Psoas muscle (tissue), 8 donors: ENCODE measurements at regions of chr4 and their contacts with region 1.

Region 1: DNA sequence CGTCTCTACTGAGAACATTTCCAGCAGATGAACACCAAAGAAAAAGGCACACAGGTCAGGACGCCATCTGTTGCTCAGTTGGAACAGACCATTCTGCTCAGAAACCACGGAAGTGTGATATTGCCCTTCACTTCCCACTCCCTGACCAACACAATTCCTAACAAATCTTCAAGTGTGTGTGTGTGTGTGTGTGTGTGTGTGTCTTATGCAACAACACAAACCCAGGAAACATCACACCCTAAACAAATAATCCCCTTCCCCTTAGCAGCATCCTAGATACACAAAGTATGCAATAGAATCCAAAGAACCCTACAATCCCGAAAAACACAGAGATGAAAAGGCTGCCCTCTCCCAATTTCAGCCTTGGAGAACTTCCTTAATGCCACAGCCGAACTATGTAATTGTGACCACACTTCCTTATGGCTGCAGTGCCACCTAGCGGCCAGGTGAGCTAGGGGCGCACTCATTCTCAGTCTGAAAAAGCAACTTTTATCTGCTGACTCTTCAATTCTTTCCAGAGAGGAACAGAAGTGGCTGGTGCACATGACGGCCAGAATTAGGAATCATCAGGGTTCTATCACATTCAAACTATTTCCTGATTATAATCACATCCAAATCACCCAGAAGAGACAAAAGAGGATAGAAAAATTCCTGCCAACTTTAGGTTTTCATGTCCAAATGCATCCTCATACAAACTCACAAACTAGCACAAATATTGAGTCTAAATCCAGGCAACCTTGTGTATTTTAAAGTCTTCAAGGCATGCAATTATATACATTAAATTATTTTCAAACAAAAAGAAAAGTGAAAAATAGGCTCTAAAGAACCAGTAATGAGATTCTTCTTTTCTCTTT is 164.9 kb downstream of the DHX15 start:
- DNase-seq: peak; percentile 75 to 87
- ATAC-seq: peak; percentile 79 to 89 (median 86)
- H3K4me3 ChIP-seq: no peak overlapping the region
- H3K27ac ChIP-seq: no peak overlapping the region
- H3K4me1 ChIP-seq: peaks cover 9% of the 10 kb centered on the region
- H3K27me3 ChIP-seq: no peaks in the 10 kb centered on the region
- CTCF ChIP-seq: peak; percentile 92

Region 2: DNA sequence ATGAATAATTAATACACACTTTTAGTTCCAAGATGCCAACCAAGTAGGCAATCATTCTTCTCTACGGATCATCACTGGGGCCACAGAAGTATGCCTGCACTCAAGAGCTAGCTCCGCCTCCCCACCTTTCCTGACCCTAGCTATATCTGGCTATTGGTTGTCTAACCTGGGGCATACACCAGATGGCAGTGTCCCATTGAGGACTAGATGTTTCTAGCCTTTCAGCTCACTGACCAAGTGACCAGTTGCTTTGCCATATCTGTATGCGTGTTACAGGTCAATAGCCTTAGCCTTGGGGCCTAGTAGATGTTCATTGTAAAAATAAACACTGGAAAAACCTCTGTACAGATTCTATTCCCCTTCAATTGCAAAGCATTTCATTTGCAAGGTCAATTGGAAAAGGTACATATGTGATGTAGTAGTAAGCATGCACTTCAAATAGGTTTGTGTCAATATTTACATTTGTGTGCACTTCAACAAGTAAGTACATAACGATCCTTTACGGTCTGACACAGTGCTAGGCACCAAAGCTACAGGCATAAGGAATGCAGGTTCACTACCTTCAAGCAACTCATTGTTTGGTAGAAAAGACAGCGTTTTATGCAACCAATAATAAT is 1051.2 kb before region 1 on chr4:
- intact Hi-C with region 1: loop called in 1 of 2 experiments (anchors 5 kb)
- DNase-seq: peak in 1 of 2 donors; percentile 25
- ATAC-seq: peak; percentile 90 to 95 (median 93)
- H3K4me3 ChIP-seq: no peak overlapping the region
- H3K27ac ChIP-seq: peak overlapping the region; percentile 75
- H3K4me1 ChIP-seq: peaks cover 26% of the 10 kb centered on the region
- H3K27me3 ChIP-seq: no peaks in the 10 kb centered on the region
- CTCF ChIP-seq: peak; percentile 66

Region 3: GRCh38 chr4:23934915-23935314 is 484.5 kb before region 1 on chr4:
- intact Hi-C with region 1: loop called (anchors 5 to 10 kb)
- DNase-seq: peak; percentile 72 to 88
- ATAC-seq: peak; percentile 80 to 84 (median 83)
- H3K4me3 ChIP-seq: no peak overlapping the region
- H3K27ac ChIP-seq: peak overlapping the region; percentile 62
- H3K4me1 ChIP-seq: peaks cover 38% of the 10 kb centered on the region
- H3K27me3 ChIP-seq: no peaks in the 10 kb centered on the region
- CTCF ChIP-seq: no peak

Region 4: GRCh38 chr4:24070117-24070516 is 349.3 kb before region 1 on chr4:
- intact Hi-C with region 1: loop called in 1 of 2 experiments (anchors 10 kb)
- DNase-seq: no peak
- ATAC-seq: no peak
- H3K4me3 ChIP-seq: no peak overlapping the region
- H3K27ac ChIP-seq: no peak overlapping the region
- H3K4me1 ChIP-seq: peaks cover 14% of the 10 kb centered on the region
- H3K27me3 ChIP-seq: no peaks in the 10 kb centered on the region
- CTCF ChIP-seq: no peak